Heart left ventricle (tissue), 16 donors: ENCODE measurements at regions of chr12 and their contacts with region 1.

Region 1: GRCh38 chr12:93378373-93379325 is 924 bp downstream of the NUDT4 start:
- DNase-seq: peak in 4 of 5 donors; percentile 38 to 50 (median 46)
- ATAC-seq: peak in 1 of 4 donors; percentile 14
- H3K4me3 ChIP-seq: peak overlapping the region; percentile 57 to 97 (median 86)
- H3K27ac ChIP-seq: peak overlapping the region; percentile 78 to 97 (median 96)
- H3K4me1 ChIP-seq: peaks cover 0 to 68% (median 30%) of the 10 kb centered on the region in 12 donors
- H3K27me3 ChIP-seq: no peaks in the 10 kb centered on the region
- CTCF ChIP-seq: no peak
- POLR2A ChIP-seq: peak in 1 of 2 donors; percentile 17

Region 2: DNA sequence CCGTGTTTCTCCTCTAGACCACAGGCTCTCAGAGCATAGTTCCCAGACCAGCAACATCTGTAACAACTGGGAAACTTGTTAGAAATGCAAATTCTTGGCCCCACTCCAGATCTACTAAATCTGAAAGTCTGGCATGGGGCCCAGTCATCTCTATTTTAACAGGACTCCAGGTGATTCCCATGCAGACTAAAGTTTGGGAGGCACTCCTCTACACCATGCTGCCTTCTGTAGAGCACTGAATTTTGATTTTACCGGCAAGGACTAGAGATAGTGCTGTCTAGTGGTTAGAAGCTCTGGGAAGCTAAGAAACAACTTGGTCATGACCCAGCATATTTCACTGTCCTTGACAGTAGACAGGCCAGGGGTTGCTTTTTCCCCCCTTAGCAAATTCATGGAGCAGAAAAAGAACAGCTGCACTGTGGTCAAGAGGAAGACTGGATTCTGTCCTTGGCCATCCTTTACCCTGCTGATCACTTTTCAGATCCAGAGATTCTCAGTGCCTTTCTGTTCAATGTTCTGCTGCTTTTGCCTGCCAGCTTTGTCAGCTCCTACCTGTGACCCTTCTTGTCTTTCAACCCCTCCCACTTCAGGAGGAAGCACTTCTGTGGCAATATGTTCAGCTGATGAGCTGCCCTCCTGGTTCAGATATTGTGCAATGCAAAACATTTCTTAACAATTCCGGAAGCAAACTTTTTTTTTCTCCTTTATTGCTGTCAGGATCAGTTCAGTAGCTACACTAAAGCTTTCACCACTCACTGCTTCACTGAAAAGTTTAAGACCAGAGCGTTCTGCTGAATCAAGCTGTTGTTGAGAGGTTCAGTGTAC is 134.7 kb before region 1 on chr12:
- intact Hi-C with region 1: loop called in 1 of 10 experiments (anchors 5 kb)
- DNase-seq: no peak
- ATAC-seq: peak; percentile 5 to 63 (median 55)
- H3K4me3 ChIP-seq: no peak overlapping the region
- H3K27ac ChIP-seq: peak overlapping the region in 5 of 12 donors; percentile 2 to 83 (median 28)
- H3K4me1 ChIP-seq: peaks cover 0 to 40% (median 22%) of the 10 kb centered on the region in 12 donors
- H3K27me3 ChIP-seq: no peaks in the 10 kb centered on the region
- CTCF ChIP-seq: no peak
- POLR2A ChIP-seq: no peak

Region 3: DNA sequence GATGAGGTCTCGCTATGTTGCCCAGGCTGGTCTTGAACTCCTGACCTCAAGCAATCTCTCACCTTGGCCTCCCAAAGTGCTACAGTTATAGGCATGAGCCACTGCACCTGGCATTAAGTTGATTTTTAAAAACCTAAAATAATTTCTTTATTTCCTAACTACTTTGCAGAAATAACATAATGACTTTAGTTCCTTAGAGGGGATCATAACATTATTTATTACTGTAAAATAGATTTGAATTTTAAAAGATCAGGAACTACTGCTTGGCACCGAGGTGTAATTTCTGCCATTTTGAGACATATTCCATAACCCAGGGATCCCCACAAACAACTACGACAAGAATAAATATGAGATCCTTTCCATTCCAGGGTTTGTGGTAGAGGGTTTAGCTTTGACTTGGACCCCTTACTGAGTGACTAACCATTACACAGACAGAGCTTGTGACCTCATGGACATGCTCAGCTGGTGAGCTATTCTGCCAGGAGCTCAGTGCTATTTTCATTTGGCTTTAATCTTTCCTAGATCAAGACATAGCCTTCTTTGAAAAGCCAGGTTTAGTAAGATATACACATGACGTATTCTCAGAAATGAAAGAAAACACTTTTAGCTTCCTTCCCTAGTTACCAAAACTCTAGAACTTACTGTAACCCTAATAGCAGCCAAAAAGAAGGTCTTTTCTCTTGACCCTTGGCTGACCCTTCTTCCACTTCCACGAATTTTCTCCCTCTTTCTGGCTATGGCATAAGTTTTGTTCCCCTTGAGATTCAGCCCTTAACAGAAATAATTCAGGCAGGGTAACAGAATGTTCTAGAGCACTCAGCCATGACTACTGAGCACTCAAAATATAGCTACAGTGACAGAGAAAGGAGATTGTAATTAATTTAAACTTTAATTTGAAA is 76.1 kb before region 1 on chr12:
- intact Hi-C with region 1: loop called in 7 of 10 experiments (anchors 5 to 10 kb)
- DNase-seq: peak in 3 of 5 donors; percentile 35 to 49 (median 44)
- ATAC-seq: peak; percentile 77 to 82 (median 81)
- H3K4me3 ChIP-seq: no peak overlapping the region
- H3K27ac ChIP-seq: peak overlapping the region in 11 of 12 donors; percentile 2 to 81 (median 61)
- H3K4me1 ChIP-seq: peaks cover 0 to 46% (median 19%) of the 10 kb centered on the region in 12 donors
- H3K27me3 ChIP-seq: no peaks in the 10 kb centered on the region
- CTCF ChIP-seq: no peak
- POLR2A ChIP-seq: no peak

Region 4: GRCh38 chr12:93347054-93347776 is 31.4 kb before region 1 on chr12:
- intact Hi-C with region 1: no loop called
- DNase-seq: no peak
- ATAC-seq: no peak
- H3K4me3 ChIP-seq: no peak overlapping the region
- H3K27ac ChIP-seq: no peak overlapping the region
- H3K4me1 ChIP-seq: peaks cover 0 to 10% (median 0%) of the 10 kb centered on the region in 12 donors
- H3K27me3 ChIP-seq: no peaks in the 10 kb centered on the region
- CTCF ChIP-seq: no peak
- POLR2A ChIP-seq: no peak